ENCODE measurements at regions of chr22 and their contacts with region 1.

Region 1: DNA sequence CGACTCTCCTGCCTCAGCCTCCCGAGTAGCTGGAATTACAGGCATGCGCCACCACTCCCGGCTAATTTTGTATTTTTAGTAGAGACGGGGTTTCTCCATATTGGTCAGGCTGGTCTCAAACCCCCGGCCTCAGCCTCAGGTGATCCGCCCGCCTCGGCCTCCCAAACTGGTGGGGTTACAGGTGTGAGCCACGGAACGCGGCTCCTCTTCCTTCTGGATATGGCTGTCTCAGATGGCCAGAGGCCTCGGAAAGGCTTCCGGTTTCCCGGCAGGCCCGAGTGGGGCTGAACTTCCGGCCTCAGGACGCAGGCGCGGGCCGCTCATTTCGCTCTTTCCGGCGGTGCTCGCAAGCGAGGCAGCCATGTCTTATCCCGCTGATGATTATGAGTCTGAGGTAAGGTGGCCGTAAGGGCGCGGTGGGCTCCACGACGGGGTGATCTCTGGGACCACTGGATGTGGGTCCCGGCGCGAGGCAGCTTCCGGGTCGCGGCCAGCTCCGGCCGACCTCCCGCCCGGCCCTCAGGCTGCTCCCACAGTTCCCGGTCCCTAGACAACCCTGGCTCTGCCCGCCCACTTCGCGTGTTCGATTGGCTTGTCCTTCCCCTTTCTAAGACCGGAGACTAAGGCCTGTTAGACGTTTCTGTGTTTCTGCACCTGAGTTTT is at the start of gene EIF3L:
- DNase-seq: peak; percentile 94
- ATAC-seq: peak; percentile 74
- H3K4me3 Mint-ChIP-seq: peak within 1 kb of the TSS; percentile 90
- H3K27ac Mint-ChIP-seq: peak within 1 kb of the TSS; percentile 96
- H3K4me1 Mint-ChIP-seq: peaks cover 47% of the 10 kb centered on the region
- H3K27me3 Mint-ChIP-seq: no peaks in the 10 kb centered on the region
- total RNA-seq, gene EIF3L: 632 to 670 TPM

Region 2: DNA sequence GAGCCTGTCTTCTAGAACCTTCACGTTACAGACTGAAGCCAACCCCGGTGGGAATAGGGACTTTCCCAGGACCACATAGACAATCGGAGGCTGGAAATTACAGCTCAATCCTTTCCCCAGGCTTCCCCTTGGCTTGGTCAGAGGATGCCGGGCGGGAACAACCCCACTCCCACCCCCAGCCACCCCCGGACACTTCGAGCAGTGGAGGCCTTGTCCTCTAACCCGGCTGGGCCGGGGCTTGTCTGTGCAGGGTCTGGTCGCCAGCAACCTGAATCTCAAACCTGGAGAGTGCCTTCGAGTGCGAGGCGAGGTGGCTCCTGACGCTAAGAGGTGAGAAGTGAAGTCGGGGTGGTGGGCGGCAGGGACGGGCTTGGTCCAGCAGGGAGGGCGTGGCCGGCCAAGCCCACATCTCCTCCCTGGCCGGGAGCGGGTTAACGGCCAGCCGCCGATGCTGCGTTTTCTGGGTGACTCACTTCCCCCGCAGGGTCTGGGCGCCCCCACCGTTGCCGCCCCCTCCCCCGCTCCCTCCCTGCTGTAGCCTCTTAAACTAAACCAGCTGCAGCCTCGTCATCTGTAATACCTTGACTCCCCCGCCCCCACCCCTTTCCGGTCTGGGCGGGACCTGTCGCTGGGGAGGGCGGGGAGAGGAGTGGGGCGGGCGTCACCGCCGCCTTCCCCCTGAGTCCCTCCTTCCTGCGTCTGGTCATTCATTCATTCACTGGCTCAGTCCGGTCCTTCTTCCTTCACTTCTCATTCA is 172.3 kb before region 1 on chr22:
- CTCF ChIA-PET with region 1: no interaction called
- POLR2A ChIA-PET with region 1: no interaction called
- intact Hi-C with region 1: loop called in 1 of 2 experiments (anchors 1 kb)
- DNase-seq: peak; percentile 97
- ATAC-seq: peak; percentile 78
- H3K4me3 Mint-ChIP-seq: peak overlapping the region; percentile 89
- H3K27ac Mint-ChIP-seq: peak overlapping the region; percentile 96
- H3K4me1 Mint-ChIP-seq: peaks cover 57% of the 10 kb centered on the region
- H3K27me3 Mint-ChIP-seq: no peaks in the 10 kb centered on the region

Region 3: DNA sequence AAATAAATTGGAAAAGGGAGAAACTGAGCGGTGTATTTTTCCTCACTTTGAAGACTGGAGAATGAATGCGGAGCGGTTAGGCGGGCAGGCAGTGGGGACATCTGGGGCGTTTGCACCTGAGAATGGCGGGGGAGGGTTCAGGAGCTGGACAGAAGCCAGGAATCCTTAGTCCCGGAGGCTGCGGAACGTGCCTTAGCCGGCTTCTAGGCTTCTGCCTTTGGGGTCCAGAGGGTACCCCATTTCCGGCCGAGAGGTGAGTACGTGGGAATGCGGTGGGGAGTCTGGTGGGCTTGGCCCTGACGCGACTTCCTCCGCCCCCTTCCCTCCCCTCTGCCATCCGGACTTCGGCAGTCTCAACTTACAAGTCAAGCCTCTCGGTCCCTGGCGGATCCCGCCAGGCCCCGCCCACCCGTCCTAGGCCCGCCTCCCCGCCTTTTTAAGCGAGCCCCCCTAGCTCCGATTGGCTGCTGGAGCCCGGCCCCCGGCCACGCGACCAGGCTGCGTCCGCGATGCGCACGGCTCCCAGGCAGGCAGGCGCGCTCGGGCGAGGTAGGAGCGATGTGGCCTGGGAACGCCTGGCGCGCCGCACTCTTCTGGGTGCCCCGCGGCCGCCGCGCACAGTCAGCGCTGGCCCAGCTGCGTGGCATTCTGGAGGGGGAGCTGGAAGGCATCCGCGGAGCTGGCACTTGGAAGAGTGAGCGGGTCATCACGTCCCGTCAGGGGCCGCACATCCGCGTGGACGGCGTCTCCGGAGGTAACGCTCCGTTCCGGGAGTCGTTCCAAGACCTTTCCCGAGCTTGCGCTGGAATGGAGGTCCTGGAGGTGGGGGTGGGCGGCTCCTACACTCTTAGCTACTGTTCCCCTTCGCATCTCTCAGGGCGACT is 41.6 kb before region 1 on chr22 and contains the start of gene GCAT:
- CTCF ChIA-PET with region 1: interaction called, 4 read pairs
- POLR2A ChIA-PET with region 1: interaction called, 3 read pairs
- intact Hi-C with region 1: loop called (anchors 1 to 5 kb)
- DNase-seq: peak; percentile 97
- ATAC-seq: peak; percentile 97
- H3K4me3 Mint-ChIP-seq: peak within 1 kb of the TSS; percentile 78
- H3K27ac Mint-ChIP-seq: peak within 1 kb of the TSS; percentile 31
- H3K4me1 Mint-ChIP-seq: peaks cover 41% of the 10 kb centered on the region
- H3K27me3 Mint-ChIP-seq: peaks cover 37% of the 10 kb centered on the region
- total RNA-seq, gene GCAT: 21.3 to 22.4 TPM

Region 4: DNA sequence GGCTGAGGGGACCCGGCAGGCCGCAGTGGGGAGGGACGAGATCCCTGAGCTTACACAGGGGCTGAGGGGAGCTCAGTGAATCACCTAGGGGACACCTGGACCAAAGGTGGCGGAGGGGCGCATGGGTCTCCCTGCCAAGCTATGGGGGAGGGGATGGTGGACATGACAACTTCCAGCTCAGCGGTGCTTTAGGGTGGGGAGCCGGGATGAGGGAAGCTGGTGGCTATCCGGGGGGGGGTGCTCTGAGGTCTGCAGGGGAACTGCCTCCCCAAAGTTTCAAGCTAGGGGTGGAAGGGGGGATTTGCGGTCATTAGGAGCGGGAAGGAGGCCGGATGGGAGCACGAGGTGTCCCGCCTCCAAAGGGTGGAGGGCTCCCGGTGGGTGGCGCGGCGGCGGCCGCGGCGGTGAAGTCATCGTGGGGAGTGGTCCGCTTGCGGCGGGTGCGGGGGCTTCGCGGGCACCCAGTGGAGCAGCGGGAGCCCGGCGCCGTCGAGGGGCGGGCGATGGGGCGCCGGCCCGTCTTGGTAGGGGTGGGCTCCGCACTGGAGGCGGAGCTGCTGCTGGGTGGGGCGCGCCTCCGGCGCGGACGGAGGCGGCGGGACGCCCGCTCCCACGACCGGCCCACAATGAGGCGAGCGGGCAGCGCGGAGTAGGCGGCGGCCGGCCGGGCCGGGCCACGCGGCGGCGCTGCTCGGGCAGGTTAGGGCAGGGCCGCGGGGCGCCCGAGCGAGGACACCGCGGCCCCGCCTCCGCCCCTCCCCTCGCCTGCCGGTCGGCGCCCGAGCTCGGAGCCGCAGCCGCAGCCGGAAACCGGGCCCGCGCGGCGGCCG is 56.5 kb after region 1 on chr22 and contains the start of gene MICALL1:
- CTCF ChIA-PET with region 1: no interaction called
- POLR2A ChIA-PET with region 1: interaction called, 3 read pairs
- intact Hi-C with region 1: loop called in 1 of 2 experiments (anchors 1 kb)
- DNase-seq: peak; percentile 80
- ATAC-seq: peak; percentile 86
- H3K4me3 Mint-ChIP-seq: peak within 1 kb of the TSS; percentile 72
- H3K27ac Mint-ChIP-seq: peak within 1 kb of the TSS; percentile 79
- H3K4me1 Mint-ChIP-seq: peaks cover 21% of the 10 kb centered on the region
- H3K27me3 Mint-ChIP-seq: no peaks in the 10 kb centered on the region
- total RNA-seq, gene MICALL1: 11.2 to 11.8 TPM

Region 5: DNA sequence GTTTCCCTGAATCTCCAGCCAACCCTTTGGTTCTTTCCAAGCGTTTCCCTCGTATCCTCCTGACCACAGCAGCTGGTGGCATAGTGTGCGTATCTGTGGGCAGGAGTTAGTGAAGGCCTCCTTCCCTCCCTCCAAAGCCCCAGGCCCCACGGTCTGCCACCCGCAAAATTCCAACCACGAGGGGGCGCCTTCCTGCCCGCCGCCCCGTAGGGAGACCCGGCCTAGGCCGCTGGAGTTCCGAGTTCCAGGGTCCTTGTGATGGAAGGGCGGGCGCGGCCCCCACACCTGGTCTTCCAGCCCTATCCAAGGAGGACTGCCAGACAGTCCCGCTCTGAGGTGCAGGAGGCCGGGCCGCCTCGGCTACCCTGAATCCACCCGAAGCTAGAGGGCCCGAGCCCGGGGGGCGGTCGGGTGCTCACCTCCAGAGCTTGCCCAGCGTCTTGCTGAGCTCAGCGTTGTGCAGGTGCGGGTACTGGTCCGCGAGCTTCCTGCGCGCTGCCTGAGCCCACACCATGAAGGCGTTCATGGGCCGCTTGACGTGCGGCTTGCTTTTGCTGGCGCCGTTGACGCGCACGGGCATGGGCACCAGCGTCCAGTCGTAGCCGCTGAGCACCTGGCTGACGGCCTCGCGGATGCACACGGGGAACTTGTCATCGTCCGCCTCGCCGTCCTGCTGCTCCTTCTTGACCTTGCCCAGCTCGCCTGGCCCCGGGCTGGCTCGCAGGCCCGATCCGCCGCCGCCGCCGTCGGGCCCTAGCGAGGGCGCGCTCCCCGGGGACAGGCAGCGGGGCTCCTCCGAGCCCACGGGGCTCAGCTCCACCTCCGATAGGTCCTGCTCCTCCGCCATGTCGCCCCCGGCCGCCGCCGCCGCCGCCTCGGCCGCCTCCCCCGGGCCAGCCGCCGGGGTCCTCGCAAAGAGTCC is 134.0 kb after region 1 on chr22:
- CTCF ChIA-PET with region 1: no interaction called
- POLR2A ChIA-PET with region 1: no interaction called
- intact Hi-C with region 1: no loop called
- DNase-seq: no peak
- ATAC-seq: no peak
- H3K4me3 Mint-ChIP-seq: no peak overlapping the region
- H3K27ac Mint-ChIP-seq: no peak overlapping the region
- H3K4me1 Mint-ChIP-seq: no peaks in the 10 kb centered on the region
- H3K27me3 Mint-ChIP-seq: no peaks in the 10 kb centered on the region

Region 6: DNA sequence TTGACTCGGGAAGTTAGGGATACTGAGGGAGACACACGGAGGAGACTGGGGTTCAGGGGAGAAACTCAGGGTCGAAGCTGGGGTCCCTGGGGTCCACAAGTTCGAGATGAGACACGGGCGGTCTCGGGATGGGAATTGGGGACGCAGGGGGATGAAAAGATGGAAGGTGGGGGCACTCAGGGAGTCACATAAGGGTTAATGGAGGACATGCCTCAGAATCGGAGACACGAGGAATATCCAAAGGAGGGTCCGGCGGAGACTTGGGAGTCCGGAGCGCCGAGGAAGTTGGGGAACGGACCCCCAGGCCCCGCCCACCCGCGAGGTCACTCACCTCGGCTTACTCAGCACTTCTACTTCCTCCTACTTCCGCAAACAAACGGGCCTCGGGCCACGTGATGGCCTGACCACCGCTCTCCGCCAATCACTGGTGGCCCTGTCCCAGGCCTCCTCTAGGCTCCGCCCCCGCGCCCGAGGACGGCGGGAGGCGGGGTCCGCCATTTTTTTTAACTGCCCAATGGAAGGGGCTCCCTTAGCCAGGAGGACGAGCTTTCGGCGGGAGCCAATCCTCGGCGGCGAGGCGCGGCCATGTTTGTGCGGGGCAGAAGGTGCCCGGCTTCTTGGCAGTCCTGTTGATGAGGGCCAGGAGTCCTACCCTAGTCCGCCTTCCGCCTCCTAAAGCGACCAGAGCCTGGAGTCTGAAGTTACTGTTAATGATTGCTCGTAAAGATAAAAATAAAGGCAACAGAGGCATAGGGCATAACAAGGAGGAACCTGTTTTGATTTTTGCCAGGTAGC is 332.4 kb after region 1 on chr22 and contains the start of gene PLA2G6:
- CTCF ChIA-PET with region 1: no interaction called
- POLR2A ChIA-PET with region 1: no interaction called
- intact Hi-C with region 1: loop called in 1 of 2 experiments (anchors 1 kb)
- DNase-seq: peak; percentile 99
- ATAC-seq: peak; percentile 92
- H3K4me3 Mint-ChIP-seq: peak within 1 kb of the TSS; percentile 96
- H3K27ac Mint-ChIP-seq: peak within 1 kb of the TSS; percentile 98
- H3K4me1 Mint-ChIP-seq: peaks cover 32% of the 10 kb centered on the region
- H3K27me3 Mint-ChIP-seq: no peaks in the 10 kb centered on the region
- total RNA-seq, gene PLA2G6: 54.0 to 57.3 TPM

Region 7: GRCh38 chr22:38398609-38399461 is 549.6 kb after region 1 on chr22:
- CTCF ChIA-PET with region 1: no interaction called
- POLR2A ChIA-PET with region 1: no interaction called
- intact Hi-C with region 1: loop called in 1 of 2 experiments (anchors 2 kb)
- DNase-seq: peak; percentile 92
- ATAC-seq: peak; percentile 67
- H3K4me3 Mint-ChIP-seq: peak overlapping the region; percentile 72
- H3K27ac Mint-ChIP-seq: peak overlapping the region; percentile 47
- H3K4me1 Mint-ChIP-seq: peaks cover 38% of the 10 kb centered on the region
- H3K27me3 Mint-ChIP-seq: no peaks in the 10 kb centered on the region

Measured in activated CD4-positive, alpha-beta T cell treated with anti-CD3 and anti-CD28 coated beads for 36 hours (primary cell).